CD4-positive, alpha-beta memory T cell (primary cell): ENCODE measurements at regions of chr3 and their contacts with region 1.

Region 1: DNA sequence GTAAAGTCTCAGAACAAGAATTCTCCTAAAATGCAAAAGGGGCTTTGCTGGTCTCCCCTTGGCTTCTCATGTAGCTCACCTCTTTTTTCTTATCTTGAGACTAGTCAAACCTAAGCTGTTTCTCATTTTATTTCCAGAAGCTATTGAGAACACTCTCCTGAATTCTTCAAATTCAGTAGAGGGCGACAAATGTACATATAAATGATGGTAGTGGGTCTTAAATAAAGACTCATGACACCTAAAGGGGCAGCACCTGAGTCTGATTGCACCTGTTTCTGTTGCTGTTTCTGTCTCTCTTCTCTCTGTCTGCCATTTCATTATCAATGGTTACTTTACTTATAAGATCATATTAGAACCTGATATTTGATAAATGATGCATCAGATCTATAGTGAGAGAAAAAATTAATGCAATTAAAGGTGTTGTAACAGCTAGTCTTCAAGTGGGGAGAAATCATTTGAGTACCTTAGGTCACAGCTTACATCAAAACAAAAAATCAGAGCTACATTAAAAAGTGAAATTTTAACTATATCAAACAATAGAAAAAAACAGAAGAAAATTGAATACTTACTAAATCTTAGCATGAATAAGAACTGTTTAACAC is 7.0 kb downstream of the ADIPOQ start:
- DNase-seq: peak in 4 of 5 donors; percentile 63 to 70 (median 66)
- H3K4me3 ChIP-seq: no peak overlapping the region
- H3K4me3 Mint-ChIP-seq: no peak overlapping the region
- H3K27ac ChIP-seq: no peak overlapping the region
- H3K27ac Mint-ChIP-seq: peak overlapping the region in 5 of 7 donors; percentile 1 to 84 (median 67)
- H3K4me1 ChIP-seq: peaks cover 9% of the 10 kb centered on the region
- H3K4me1 Mint-ChIP-seq: peaks cover 8 to 19% (median 14%) of the 10 kb centered on the region in 4 donors
- H3K27me3 ChIP-seq: peaks cover 4% of the 10 kb centered on the region
- H3K27me3 Mint-ChIP-seq: peaks cover 3 to 9% of the 10 kb centered on the region in 2 donors

Region 2: DNA sequence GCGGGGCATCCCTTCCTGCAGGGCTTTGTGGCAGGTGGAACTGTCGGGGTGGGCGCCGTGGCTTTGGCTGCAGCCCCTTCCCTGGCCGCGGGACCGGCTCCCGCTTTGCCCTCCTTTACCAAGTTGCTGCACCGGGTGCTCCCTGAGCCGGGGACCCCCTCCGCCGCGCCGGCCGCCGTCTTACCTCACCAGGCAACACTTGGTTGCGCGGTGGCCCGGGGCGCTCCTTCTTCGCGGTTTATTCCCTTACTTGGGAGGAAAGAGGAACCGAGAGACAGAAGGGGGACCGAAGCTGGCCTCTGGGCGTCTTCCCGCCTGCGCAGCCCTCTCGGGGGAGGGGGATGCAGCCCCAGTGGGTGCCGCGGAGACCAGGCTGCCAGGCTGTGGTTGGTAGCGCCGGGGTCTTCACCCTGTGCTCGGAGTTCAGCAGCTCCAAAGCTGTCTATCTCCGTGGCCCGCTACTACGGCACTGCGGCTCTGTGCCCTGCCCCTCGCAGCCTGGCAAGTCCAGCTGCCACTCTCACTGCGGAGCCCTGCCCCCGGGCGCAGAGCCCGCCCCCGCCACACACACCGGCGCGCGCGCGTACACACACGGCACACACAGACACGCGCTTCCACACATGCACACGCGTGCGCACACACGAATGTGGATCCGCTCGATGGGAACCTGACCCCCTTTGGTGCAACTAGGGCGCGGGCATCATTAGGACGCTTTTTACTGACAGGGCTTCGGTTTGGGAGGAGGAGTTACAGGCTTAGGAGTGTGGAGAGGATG is 487.5 kb before region 1 on chr3 and contains the start of gene DGKG:
- CTCF ChIA-PET with region 1: no interaction called
- POLR2A ChIA-PET with region 1: no interaction called
- intact Hi-C with region 1: no loop called
- DNase-seq: peak in 2 of 5 donors; percentile 1 to 4
- H3K4me3 ChIP-seq: no peak within 1 kb of the TSS
- H3K4me3 Mint-ChIP-seq: peak within 1 kb of the TSS in 7 of 8 donors; percentile 23 to 75 (median 47)
- H3K27ac ChIP-seq: no peak within 1 kb of the TSS
- H3K27ac Mint-ChIP-seq: no peak within 1 kb of the TSS
- H3K4me1 ChIP-seq: peaks cover 9% of the 10 kb centered on the region
- H3K4me1 Mint-ChIP-seq: peaks cover 3 to 7% (median 4%) of the 10 kb centered on the region in 4 donors
- H3K27me3 ChIP-seq: peaks cover 20% of the 10 kb centered on the region
- H3K27me3 Mint-ChIP-seq: peaks cover 27 to 37% of the 10 kb centered on the region in 2 donors
- total RNA-seq, gene DGKG: 0.75 TPM in 1 of 2 experiments, not detected in the other

Region 3: GRCh38 chr3:186915806-186916796 is 66.6 kb after region 1 on chr3:
- CTCF ChIA-PET with region 1: interaction called, 24 read pairs
- POLR2A ChIA-PET with region 1: interaction called, 4 read pairs
- intact Hi-C with region 1: no loop called
- DNase-seq: peak in 1 of 5 donors; percentile 11
- H3K4me3 ChIP-seq: no peak overlapping the region
- H3K4me3 Mint-ChIP-seq: peak overlapping the region in 7 of 8 donors; percentile 3 to 86 (median 50)
- H3K27ac ChIP-seq: no peak overlapping the region
- H3K27ac Mint-ChIP-seq: peak overlapping the region in 5 of 7 donors; percentile 20 to 84 (median 66)
- H3K4me1 ChIP-seq: peaks cover 28% of the 10 kb centered on the region
- H3K4me1 Mint-ChIP-seq: peaks cover 24 to 53% (median 35%) of the 10 kb centered on the region in 4 donors
- H3K27me3 ChIP-seq: no peaks in the 10 kb centered on the region
- H3K27me3 Mint-ChIP-seq: no peaks in the 10 kb centered on the region

Region 4: GRCh38 chr3:186965141-186965879 is 115.8 kb after region 1 on chr3:
- CTCF ChIA-PET with region 1: interaction called, 17 read pairs
- POLR2A ChIA-PET with region 1: interaction called, 3 read pairs
- intact Hi-C with region 1: no loop called
- DNase-seq: no peak
- H3K4me3 ChIP-seq: no peak overlapping the region
- H3K4me3 Mint-ChIP-seq: no peak overlapping the region
- H3K27ac ChIP-seq: no peak overlapping the region
- H3K27ac Mint-ChIP-seq: peak overlapping the region in 6 of 7 donors; percentile 29 to 79 (median 54)
- H3K4me1 ChIP-seq: peaks cover 33% of the 10 kb centered on the region
- H3K4me1 Mint-ChIP-seq: peaks cover 37 to 77% (median 55%) of the 10 kb centered on the region in 4 donors
- H3K27me3 ChIP-seq: no peaks in the 10 kb centered on the region
- H3K27me3 Mint-ChIP-seq: no peaks in the 10 kb centered on the region

Region 5: DNA sequence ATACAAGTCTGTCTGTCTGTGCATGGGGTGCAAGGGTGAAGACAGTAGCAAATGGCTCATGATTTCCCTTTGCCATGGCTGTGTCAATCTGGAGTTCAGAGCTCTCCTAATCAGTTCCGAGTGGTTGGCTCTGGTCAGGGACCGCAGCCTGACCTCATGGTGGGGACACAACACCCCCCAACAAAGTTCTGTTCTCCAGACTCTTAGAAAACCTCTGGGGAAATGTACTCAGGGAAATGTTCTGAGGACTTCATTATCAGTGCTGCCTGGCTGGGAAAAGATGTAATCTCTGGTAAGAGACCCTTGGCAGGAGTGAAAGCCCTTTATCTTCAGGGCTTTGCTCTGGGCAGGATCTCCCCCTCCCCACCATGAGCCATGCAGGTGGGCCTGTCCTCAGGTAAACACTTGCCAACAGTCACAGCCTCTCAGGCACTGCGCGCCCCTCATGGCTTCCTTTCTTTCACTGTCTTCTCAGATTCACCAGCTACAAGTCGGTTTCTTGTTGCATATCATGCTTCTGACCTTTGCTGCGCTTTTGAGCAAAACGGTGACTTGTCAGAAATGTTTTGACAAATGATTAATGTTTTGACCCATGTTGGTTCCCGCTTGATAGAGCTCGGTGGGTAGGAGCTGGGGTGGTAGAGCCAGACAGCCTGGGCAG is 176.3 kb after region 1 on chr3:
- CTCF ChIA-PET with region 1: interaction called, 13 read pairs
- POLR2A ChIA-PET with region 1: interaction called, 5 read pairs
- intact Hi-C with region 1: loop called (anchors 5 kb)
- DNase-seq: peak in 3 of 5 donors; percentile 18 to 49 (median 35)
- H3K4me3 ChIP-seq: peak overlapping the region; percentile 57 to 89
- H3K4me3 Mint-ChIP-seq: peak overlapping the region; percentile 81 to 97 (median 92)
- H3K27ac ChIP-seq: peak overlapping the region; percentile 68
- H3K27ac Mint-ChIP-seq: peak overlapping the region; percentile 86 to 98 (median 92)
- H3K4me1 ChIP-seq: peaks cover 82% of the 10 kb centered on the region
- H3K4me1 Mint-ChIP-seq: peaks cover 48 to 80% (median 62%) of the 10 kb centered on the region in 4 donors
- H3K27me3 ChIP-seq: no peaks in the 10 kb centered on the region
- H3K27me3 Mint-ChIP-seq: no peaks in the 10 kb centered on the region

Region 6: GRCh38 chr3:187101184-187102072 is 252.0 kb after region 1 on chr3:
- CTCF ChIA-PET with region 1: interaction called, 22 read pairs
- POLR2A ChIA-PET with region 1: interaction called, 3 read pairs
- intact Hi-C with region 1: no loop called
- DNase-seq: peak; percentile 43 to 57 (median 48)
- H3K4me3 ChIP-seq: peak overlapping the region; percentile 17 to 27
- H3K4me3 Mint-ChIP-seq: peak overlapping the region; percentile 70 to 91 (median 84)
- H3K27ac ChIP-seq: peak overlapping the region; percentile 18
- H3K27ac Mint-ChIP-seq: peak overlapping the region; percentile 4 to 93 (median 88)
- H3K4me1 ChIP-seq: peaks cover 23% of the 10 kb centered on the region
- H3K4me1 Mint-ChIP-seq: peaks cover 26 to 35% (median 28%) of the 10 kb centered on the region in 4 donors
- H3K27me3 ChIP-seq: no peaks in the 10 kb centered on the region
- H3K27me3 Mint-ChIP-seq: no peaks in the 10 kb centered on the region

Region 7: DNA sequence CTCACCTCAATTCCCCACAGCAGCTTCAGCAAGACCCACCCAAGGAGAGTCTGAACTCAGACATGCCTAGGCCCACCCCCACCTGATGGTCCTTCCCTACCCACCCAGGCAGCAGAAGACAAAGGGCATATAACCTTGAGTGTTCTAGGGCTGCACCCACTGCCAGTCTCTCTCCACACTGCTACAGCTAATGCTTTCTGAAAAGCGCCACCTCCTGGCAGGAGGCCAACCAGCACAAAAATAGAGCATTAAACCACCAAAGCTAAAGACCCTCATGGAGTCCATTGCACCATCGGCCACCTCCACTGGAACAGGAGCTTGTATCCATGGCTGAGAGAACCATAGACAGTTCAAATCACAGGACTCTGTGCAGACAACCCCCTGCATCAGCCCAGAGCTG is 301.1 kb after region 1 on chr3:
- CTCF ChIA-PET with region 1: interaction called, 48 read pairs
- POLR2A ChIA-PET with region 1: interaction called, 6 read pairs
- intact Hi-C with region 1: loop called (anchors 1 kb)
- DNase-seq: peak; percentile 47 to 61 (median 55)
- H3K4me3 ChIP-seq: no peak overlapping the region
- H3K4me3 Mint-ChIP-seq: no peak overlapping the region
- H3K27ac ChIP-seq: no peak overlapping the region
- H3K27ac Mint-ChIP-seq: no peak overlapping the region
- H3K4me1 ChIP-seq: no peaks in the 10 kb centered on the region
- H3K4me1 Mint-ChIP-seq: peaks cover 0 to 6% (median under 1%) of the 10 kb centered on the region in 4 donors
- H3K27me3 ChIP-seq: no peaks in the 10 kb centered on the region
- H3K27me3 Mint-ChIP-seq: peaks cover 6 to 13% of the 10 kb centered on the region in 2 donors

Region 8: GRCh38 chr3:187237741-187238140 is 388.3 kb after region 1 on chr3:
- CTCF ChIA-PET with region 1: no interaction called
- POLR2A ChIA-PET with region 1: no interaction called
- intact Hi-C with region 1: no loop called
- DNase-seq: no peak
- H3K4me3 ChIP-seq: no peak overlapping the region
- H3K4me3 Mint-ChIP-seq: no peak overlapping the region
- H3K27ac ChIP-seq: no peak overlapping the region
- H3K27ac Mint-ChIP-seq: no peak overlapping the region
- H3K4me1 ChIP-seq: no peaks in the 10 kb centered on the region
- H3K4me1 Mint-ChIP-seq: no peaks in the 10 kb centered on the region
- H3K27me3 ChIP-seq: no peaks in the 10 kb centered on the region
- H3K27me3 Mint-ChIP-seq: no peaks in the 10 kb centered on the region

Region 9: DNA sequence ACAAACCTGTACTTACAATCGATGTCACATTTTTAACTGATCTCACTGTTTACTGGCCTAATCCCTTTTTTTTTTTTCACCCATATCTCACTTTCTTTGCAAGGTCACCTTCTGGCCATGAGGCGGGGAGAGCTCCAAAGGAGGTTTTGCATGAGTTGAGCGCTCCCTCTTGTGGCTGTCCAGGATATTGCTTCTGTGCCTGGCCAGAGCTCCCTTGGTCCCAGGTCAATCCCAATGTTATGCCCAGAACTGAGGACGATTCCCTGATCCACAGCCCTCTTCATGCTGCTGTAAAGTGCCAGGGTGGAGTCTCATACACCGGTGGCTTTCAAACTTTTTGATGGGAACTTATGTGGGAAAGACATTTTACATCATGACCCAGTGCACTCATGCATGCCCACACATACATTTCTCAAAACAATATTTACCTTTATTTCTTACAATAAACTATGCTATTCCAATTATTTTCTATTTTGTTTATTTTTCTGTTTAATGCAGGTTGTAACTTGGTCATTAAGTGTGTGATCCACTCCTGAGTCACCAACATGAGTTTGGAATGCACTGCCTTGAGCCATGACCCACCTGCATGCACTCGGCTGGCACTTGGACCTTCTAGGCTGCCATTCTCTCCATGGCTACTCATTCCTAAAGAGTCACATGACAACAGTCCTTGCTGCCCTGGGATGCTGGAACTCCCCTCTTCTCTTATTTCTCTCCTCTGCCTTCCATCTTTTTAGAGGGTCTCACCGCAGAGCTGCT is 830.3 kb after region 1 on chr3:
- CTCF ChIA-PET with region 1: no interaction called
- POLR2A ChIA-PET with region 1: no interaction called
- intact Hi-C with region 1: no loop called
- DNase-seq: peak; percentile 37 to 63 (median 54)
- H3K4me3 ChIP-seq: no peak overlapping the region
- H3K4me3 Mint-ChIP-seq: no peak overlapping the region
- H3K27ac ChIP-seq: no peak overlapping the region
- H3K27ac Mint-ChIP-seq: no peak overlapping the region
- H3K4me1 ChIP-seq: no peaks in the 10 kb centered on the region
- H3K4me1 Mint-ChIP-seq: peaks cover 0 to 2% (median 0%) of the 10 kb centered on the region in 4 donors
- H3K27me3 ChIP-seq: no peaks in the 10 kb centered on the region
- H3K27me3 Mint-ChIP-seq: peaks cover 29 to 43% of the 10 kb centered on the region in 2 donors